IMR-90 (cell line): ENCODE measurements at regions of chr19 and their contacts with region 1.

Region 1: DNA sequence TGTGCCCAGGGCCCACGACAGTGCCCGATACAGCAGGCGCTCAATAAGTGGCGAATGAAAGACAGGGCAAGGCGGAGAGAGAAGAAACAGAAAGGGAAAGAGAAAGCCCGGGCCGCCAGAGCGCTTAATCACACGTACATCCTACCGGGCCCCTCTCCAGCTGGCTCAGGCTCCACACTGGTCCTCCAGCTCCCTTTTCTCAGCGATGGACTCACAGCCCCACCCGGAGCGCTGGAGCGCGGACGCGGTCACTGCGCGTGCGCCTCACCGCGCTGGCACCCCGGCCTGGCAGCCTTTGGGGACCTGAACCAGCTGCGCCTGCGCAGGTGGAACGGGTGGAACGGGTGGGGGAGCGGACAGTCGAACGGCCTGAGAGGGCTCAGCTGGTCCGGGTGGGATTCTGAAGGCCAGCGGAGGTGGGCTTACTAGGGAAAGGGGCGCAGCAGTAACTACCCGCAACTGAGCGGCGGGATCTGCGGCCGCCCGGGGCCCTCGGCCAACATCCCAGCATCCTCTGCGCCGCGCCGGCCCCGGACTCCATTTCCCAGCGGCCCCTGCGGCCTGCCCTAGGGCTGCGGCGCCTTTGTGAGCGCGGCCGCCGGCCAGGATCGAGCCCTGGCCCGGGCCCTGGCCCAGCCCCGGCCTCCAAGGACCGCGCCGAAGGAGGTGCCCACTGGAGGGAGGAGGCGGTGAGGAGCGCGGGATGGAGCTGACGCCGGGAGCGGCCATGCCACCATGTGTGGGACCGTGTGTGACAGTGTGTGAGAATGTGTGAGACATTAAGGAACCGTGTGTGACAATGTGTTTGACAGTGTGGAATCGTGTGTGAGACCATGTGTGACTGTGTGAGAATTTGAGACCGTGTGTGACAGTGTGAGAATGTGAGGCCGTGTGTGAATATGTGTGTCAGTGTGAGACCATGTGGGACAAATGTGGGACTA is at the start of gene ZNF583:
- DNase-seq: peak; percentile 97
- ATAC-seq: peak; percentile 97
- H3K4me3 ChIP-seq: peak within 1 kb of the TSS; percentile 79
- H3K27ac ChIP-seq: peak within 1 kb of the TSS; percentile 95
- H3K4me1 ChIP-seq: no peaks in the 10 kb centered on the region
- H3K27me3 ChIP-seq: no peaks in the 10 kb centered on the region
- CTCF ChIP-seq: no peak
- POLR2A ChIP-seq: peak; percentile 26; the same call in 1 of the 2 replicates
- RAD21 ChIP-seq: no peak
- total RNA-seq, gene ZNF583: 5.4 and 6.9 TPM in 2 replicates

Region 2: GRCh38 chr19:57389730-57390598 is 985.9 kb after region 1 on chr19 and contains the start of gene ZNF548:
- CTCF ChIA-PET with region 1: no interaction called
- POLR2A ChIA-PET with region 1: no interaction called
- dilution Hi-C with region 1: no loop called
- in situ Hi-C with region 1: loop called (anchors 25 kb)
- intact Hi-C with region 1: no loop called
- DNase-seq: peak; percentile 100
- ATAC-seq: peak; percentile 96
- H3K4me3 ChIP-seq: peak within 1 kb of the TSS; percentile 50
- H3K27ac ChIP-seq: peak within 1 kb of the TSS; percentile 31
- H3K4me1 ChIP-seq: peaks cover 2% of the 10 kb centered on the region; the same call in 1 of the 2 replicates
- H3K27me3 ChIP-seq: no peaks in the 10 kb centered on the region
- CTCF ChIP-seq: peak; percentile 34
- POLR2A ChIP-seq: peak; percentile 87
- RAD21 ChIP-seq: no peak
- total RNA-seq, gene ZNF548: 23.9 and 24.2 TPM in 2 replicates